ENCODE measurements at regions of chr22 and their contacts with region 1.

Region 1: DNA sequence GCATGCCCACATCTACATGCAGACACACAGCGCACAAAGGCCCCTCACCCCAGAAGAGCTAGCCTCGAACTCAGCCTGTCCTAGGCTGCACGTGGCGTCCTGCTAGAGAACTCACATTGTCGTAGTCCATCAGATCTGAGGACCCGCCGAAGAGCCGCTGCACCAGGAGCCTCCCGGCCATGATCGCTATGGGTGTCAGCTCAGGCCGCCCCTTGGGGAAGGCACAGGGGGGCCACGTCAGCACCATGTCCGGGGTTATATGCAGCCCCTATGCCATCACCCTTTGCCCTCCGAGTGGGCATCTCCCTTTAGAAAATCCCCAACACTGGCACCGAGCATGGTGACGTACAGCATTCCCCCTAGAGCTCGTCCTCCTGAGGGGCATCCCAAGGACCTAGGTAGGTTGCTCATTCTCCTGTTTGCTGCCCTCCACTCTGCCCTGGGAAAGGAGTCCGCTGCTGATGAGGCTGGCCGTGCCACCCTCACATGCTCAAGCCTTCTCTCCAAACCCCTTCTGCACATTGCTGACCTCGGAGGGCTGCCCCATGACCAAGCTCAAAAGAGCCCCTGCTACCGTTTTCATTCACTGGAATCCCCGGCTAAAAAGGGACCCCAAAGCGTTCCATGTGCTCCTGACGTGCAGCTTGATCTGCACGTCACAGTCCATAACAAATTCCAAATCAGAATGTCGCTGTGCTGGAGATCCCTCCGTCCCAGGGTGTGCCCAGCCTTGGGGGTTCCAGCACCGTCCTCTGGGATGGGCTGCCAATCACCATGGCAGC is 26.0 kb upstream of the GNB1L start:
- DNase-seq: no peak
- ATAC-seq: no peak
- H3K4me3 ChIP-seq: peak overlapping the region; percentile 12; the same call in 1 of the 2 replicates
- H3K27ac ChIP-seq: peak overlapping the region; percentile 53
- H3K4me1 ChIP-seq: peaks cover 40% of the 10 kb centered on the region
- H3K27me3 ChIP-seq: no peaks in the 10 kb centered on the region
- CTCF ChIP-seq: no peak

Region 2: GRCh38 chr22:19891317-19892256 is 10.9 kb after region 1 on chr22:
- CTCF ChIA-PET with region 1: no interaction called
- POLR2A ChIA-PET with region 1: no interaction called
- intact Hi-C with region 1: loop called (anchors 1 kb)
- DNase-seq: peak; percentile 79
- ATAC-seq: peak; percentile 93
- H3K4me3 ChIP-seq: peak overlapping the region; percentile 22; the same call in 1 of the 2 replicates
- H3K27ac ChIP-seq: peak overlapping the region; percentile 54
- H3K4me1 ChIP-seq: peaks cover 19% of the 10 kb centered on the region
- H3K27me3 ChIP-seq: no peaks in the 10 kb centered on the region
- CTCF ChIP-seq: no peak

Measured in PC-3 (cell line).